ENCODE measurements at regions of chr3 and their contacts with region 1.

Region 1: DNA sequence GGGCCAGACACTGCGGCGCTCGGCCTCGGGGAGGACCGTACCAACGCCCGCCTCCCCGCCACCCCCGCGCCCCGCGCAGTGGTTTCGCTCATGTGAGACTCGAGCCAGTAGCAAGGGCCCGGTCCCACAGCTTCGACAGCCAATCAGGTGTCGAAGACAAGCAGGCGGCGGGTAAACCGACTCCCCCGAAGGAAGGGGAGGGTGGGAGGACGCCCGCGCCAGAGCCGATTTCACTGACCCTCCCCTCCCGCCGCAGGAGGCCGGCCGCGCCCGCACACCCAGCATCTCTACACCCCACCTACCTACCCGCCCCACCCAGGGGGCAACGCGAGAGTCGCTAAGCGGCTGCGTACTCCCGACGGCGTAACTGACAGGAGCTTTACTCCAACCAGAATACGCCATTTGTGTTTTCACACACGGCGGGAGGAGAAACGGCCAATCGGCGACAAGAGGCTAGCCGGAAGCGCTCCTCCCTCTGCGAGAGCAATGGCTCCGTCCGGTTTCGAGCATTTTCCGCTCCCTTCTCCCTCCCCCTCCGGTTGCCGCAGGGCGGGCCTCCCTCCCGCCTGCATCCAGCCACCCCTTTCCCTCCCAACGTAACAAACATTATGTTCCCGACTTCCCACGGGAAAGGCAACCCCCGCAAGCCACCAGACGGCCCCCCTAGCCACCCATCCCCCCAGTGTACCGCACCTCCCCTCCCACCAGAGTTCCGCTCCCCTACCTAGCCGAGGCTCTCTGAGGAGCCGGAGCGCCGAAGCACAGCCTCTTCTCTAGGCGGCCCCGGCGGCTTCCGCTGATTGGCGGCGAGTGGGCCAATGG is 504 bp upstream of the SETD5 start:
- DNase-seq: peak; percentile 98
- ATAC-seq: peak; percentile 83
- H3K4me3 ChIP-seq: peak overlapping the region; percentile 77; the same call in 1 of the 2 replicates
- H3K27ac ChIP-seq: peak overlapping the region; percentile 93
- H3K4me1 ChIP-seq: peaks cover 8% of the 10 kb centered on the region; the same call in 1 of the 2 replicates
- H3K27me3 ChIP-seq: no peaks in the 10 kb centered on the region
- CTCF ChIP-seq: no peak
- EP300 ChIP-seq: no peak
- POLR2A ChIP-seq: peak; percentile 93
- RAD21 ChIP-seq: no peak

Region 2: GRCh38 chr3:9362731-9363530 is 34.0 kb before region 1 on chr3 and contains the start of gene THUMPD3:
- CTCF ChIA-PET with region 1: interaction called, 9 read pairs
- POLR2A ChIA-PET with region 1: interaction called, 47 read pairs
- RAD21 ChIA-PET with region 1: interaction called, 19 read pairs
- SMC1A ChIA-PET with region 1: interaction called, 39 read pairs
- in situ Hi-C with region 1: no loop called
- intact Hi-C with region 1: loop called (anchors 1 kb)
- DNase-seq: peak; percentile 66
- ATAC-seq: peak; percentile 98
- H3K4me3 ChIP-seq: peak within 1 kb of the TSS; percentile 84
- H3K27ac ChIP-seq: peak within 1 kb of the TSS; percentile 95
- H3K4me1 ChIP-seq: no peaks in the 10 kb centered on the region; the same call in none of the 2 replicates
- H3K27me3 ChIP-seq: no peaks in the 10 kb centered on the region
- CTCF ChIP-seq: no peak
- EP300 ChIP-seq: peak in 1 of 2 experiments; percentile 50; a peak in 2 of 4 replicates
- POLR2A ChIP-seq: peak; percentile 95
- RAD21 ChIP-seq: no peak
- polyA plus RNA-seq, gene THUMPD3: 29.2 to 32.1 TPM

Region 3: GRCh38 chr3:9373465-9373864 is 23.4 kb before region 1 on chr3:
- CTCF ChIA-PET with region 1: no interaction called
- POLR2A ChIA-PET with region 1: interaction called, 10 read pairs
- RAD21 ChIA-PET with region 1: interaction called, 3 read pairs
- SMC1A ChIA-PET with region 1: interaction called, 18 read pairs
- in situ Hi-C with region 1: no loop called
- intact Hi-C with region 1: no loop called
- DNase-seq: no peak
- ATAC-seq: peak; percentile 50
- H3K4me3 ChIP-seq: no peak overlapping the region
- H3K27ac ChIP-seq: no peak overlapping the region
- H3K4me1 ChIP-seq: peaks cover 4% of the 10 kb centered on the region; the same call in 1 of the 2 replicates
- H3K27me3 ChIP-seq: no peaks in the 10 kb centered on the region
- CTCF ChIP-seq: no peak
- EP300 ChIP-seq: no peak
- POLR2A ChIP-seq: no peak
- RAD21 ChIP-seq: no peak

Region 4: GRCh38 chr3:9384141-9384853 is 12.6 kb before region 1 on chr3:
- CTCF ChIA-PET with region 1: interaction called, 4 read pairs
- POLR2A ChIA-PET with region 1: interaction called, 10 read pairs
- RAD21 ChIA-PET with region 1: interaction called, 3 read pairs
- SMC1A ChIA-PET with region 1: interaction called, 13 read pairs
- in situ Hi-C with region 1: no loop called
- intact Hi-C with region 1: no loop called
- DNase-seq: no peak
- ATAC-seq: no peak
- H3K4me3 ChIP-seq: no peak overlapping the region
- H3K27ac ChIP-seq: no peak overlapping the region
- H3K4me1 ChIP-seq: no peaks in the 10 kb centered on the region
- H3K27me3 ChIP-seq: no peaks in the 10 kb centered on the region
- CTCF ChIP-seq: no peak
- EP300 ChIP-seq: no peak
- POLR2A ChIP-seq: peak; percentile 55
- RAD21 ChIP-seq: no peak

Region 5: GRCh38 chr3:9409981-9410854 is 13.3 kb after region 1 on chr3:
- CTCF ChIA-PET with region 1: interaction called, 21 read pairs
- POLR2A ChIA-PET with region 1: interaction called, 24 read pairs
- RAD21 ChIA-PET with region 1: interaction called, 20 read pairs
- SMC1A ChIA-PET with region 1: interaction called, 43 read pairs
- in situ Hi-C with region 1: no loop called
- intact Hi-C with region 1: no loop called
- DNase-seq: no peak
- ATAC-seq: peak; percentile 70
- H3K4me3 ChIP-seq: no peak overlapping the region
- H3K27ac ChIP-seq: no peak overlapping the region
- H3K4me1 ChIP-seq: peaks cover 4% of the 10 kb centered on the region; the same call in 1 of the 2 replicates
- H3K27me3 ChIP-seq: no peaks in the 10 kb centered on the region
- CTCF ChIP-seq: no peak
- EP300 ChIP-seq: no peak
- POLR2A ChIP-seq: no peak
- RAD21 ChIP-seq: no peak

Region 6: GRCh38 chr3:9416139-9416780 is 19.3 kb after region 1 on chr3:
- CTCF ChIA-PET with region 1: interaction called, 11 read pairs
- POLR2A ChIA-PET with region 1: interaction called, 18 read pairs
- RAD21 ChIA-PET with region 1: no interaction called
- SMC1A ChIA-PET with region 1: interaction called, 13 read pairs
- in situ Hi-C with region 1: no loop called
- intact Hi-C with region 1: no loop called
- DNase-seq: no peak
- ATAC-seq: no peak
- H3K4me3 ChIP-seq: no peak overlapping the region
- H3K27ac ChIP-seq: no peak overlapping the region
- H3K4me1 ChIP-seq: no peaks in the 10 kb centered on the region
- H3K27me3 ChIP-seq: no peaks in the 10 kb centered on the region
- CTCF ChIP-seq: no peak
- EP300 ChIP-seq: no peak
- POLR2A ChIP-seq: no peak
- RAD21 ChIP-seq: no peak

Region 7: GRCh38 chr3:9422712-9423424 is 26.0 kb after region 1 on chr3:
- CTCF ChIA-PET with region 1: interaction called, 11 read pairs
- POLR2A ChIA-PET with region 1: interaction called, 6 read pairs
- RAD21 ChIA-PET with region 1: no interaction called
- SMC1A ChIA-PET with region 1: interaction called, 14 read pairs
- in situ Hi-C with region 1: no loop called
- intact Hi-C with region 1: no loop called
- DNase-seq: no peak
- ATAC-seq: peak; percentile 68
- H3K4me3 ChIP-seq: no peak overlapping the region
- H3K27ac ChIP-seq: no peak overlapping the region
- H3K4me1 ChIP-seq: no peaks in the 10 kb centered on the region
- H3K27me3 ChIP-seq: no peaks in the 10 kb centered on the region
- CTCF ChIP-seq: peak; percentile 18 to 45 (median 26); a peak in 4 of 6 replicates
- EP300 ChIP-seq: no peak
- POLR2A ChIP-seq: no peak
- RAD21 ChIP-seq: peak; percentile 53

Region 8: GRCh38 chr3:9550999-9551398 is 154.1 kb after region 1 on chr3:
- CTCF ChIA-PET with region 1: no interaction called
- POLR2A ChIA-PET with region 1: no interaction called
- RAD21 ChIA-PET with region 1: no interaction called
- SMC1A ChIA-PET with region 1: no interaction called
- in situ Hi-C with region 1: no loop called
- intact Hi-C with region 1: no loop called
- DNase-seq: no peak
- ATAC-seq: no peak
- H3K4me3 ChIP-seq: no peak overlapping the region
- H3K27ac ChIP-seq: no peak overlapping the region
- H3K4me1 ChIP-seq: no peaks in the 10 kb centered on the region
- H3K27me3 ChIP-seq: peaks cover 0 to 1% of the 10 kb centered on the region in 2 experiments; a peak in 2 of 4 replicates
- CTCF ChIP-seq: no peak
- EP300 ChIP-seq: no peak
- POLR2A ChIP-seq: no peak
- RAD21 ChIP-seq: no peak